ENCODE measurements at regions of chr2 and their contacts with region 1.

Region 1: DNA sequence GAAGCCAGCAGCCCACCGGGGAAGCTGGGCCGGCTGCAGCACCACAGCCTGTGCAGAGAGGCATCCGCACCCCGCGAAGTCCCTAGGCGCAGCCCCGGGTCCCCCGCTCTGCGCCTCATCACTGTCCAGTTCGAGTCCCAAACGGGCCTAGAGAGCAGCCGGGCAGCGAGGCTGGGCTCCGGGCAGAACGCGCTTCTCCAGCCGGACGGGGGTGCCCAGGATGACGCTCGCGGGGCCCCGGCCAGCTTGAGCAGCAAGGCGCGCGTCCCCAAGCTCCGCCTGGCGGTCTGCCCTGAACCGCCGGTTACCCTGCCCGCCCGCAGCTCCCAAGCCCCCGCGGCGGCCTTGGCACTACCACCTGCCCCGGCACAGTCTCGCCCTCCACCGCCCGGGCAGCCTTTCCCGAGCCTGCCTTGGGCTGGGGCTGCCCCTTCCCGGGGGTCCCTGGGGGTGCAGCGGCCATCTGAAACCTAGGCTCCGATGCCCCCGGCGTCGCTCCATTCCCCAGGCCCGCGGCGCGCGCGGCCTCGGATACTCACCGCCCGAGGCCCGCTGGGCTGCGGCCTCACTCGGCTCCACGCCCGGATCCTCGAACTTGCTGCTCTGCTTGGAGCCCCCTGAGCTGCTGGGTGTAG is 591 bp downstream of the SLC16A14 start:
- DNase-seq: peak; percentile 7 to 69 (median 39)
- ATAC-seq: peak; percentile 24
- H3K4me3 ChIP-seq: peak overlapping the region; percentile 50 to 63
- H3K4me3 Mint-ChIP-seq: peak overlapping the region; percentile 80
- H3K27ac ChIP-seq: no peak overlapping the region
- H3K27ac Mint-ChIP-seq: no peak overlapping the region
- H3K4me1 ChIP-seq: no peaks in the 10 kb centered on the region
- H3K4me1 Mint-ChIP-seq: peaks cover 15% of the 10 kb centered on the region
- H3K27me3 ChIP-seq: no peaks in the 10 kb centered on the region
- H3K27me3 Mint-ChIP-seq: peaks cover 27% of the 10 kb centered on the region
- CTCF ChIP-seq: peak; percentile 8

Region 2: GRCh38 chr2:229852565-229852964 is 215.6 kb before region 1 on chr2:
- CTCF ChIA-PET with region 1: no interaction called
- POLR2A ChIA-PET with region 1: no interaction called
- intact Hi-C with region 1: no loop called
- DNase-seq: peak; percentile 16 to 75 (median 63)
- ATAC-seq: peak; percentile 92
- H3K4me3 ChIP-seq: no peak overlapping the region
- H3K4me3 Mint-ChIP-seq: peak overlapping the region; percentile 33
- H3K27ac ChIP-seq: peak overlapping the region; percentile 0 to 28
- H3K27ac Mint-ChIP-seq: peak overlapping the region; percentile 87
- H3K4me1 ChIP-seq: peaks cover 34% of the 10 kb centered on the region
- H3K4me1 Mint-ChIP-seq: peaks cover 73% of the 10 kb centered on the region
- H3K27me3 ChIP-seq: no peaks in the 10 kb centered on the region
- H3K27me3 Mint-ChIP-seq: no peaks in the 10 kb centered on the region
- CTCF ChIP-seq: no peak

Region 3: DNA sequence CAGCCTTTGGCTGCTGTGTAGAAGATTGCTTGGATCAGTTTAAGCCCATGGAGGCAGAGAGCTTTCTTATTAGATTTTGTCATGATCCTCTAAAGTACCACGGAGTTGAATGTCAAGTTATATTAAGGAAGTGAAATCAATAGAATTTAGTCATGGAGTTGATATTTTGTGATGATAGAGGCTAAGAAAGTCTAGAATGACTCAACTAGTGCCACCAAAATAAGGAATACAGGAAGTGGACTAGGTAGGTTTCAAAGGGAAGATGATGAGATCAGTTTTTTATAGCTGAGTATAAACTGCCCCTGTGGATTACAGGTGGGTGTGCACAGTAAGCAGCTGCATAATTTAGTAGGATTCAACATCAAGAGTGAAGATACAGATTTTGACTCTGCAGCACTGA is 120.6 kb before region 1 on chr2:
- CTCF ChIA-PET with region 1: no interaction called
- POLR2A ChIA-PET with region 1: no interaction called
- intact Hi-C with region 1: no loop called
- DNase-seq: no peak
- ATAC-seq: no peak
- H3K4me3 ChIP-seq: no peak overlapping the region
- H3K4me3 Mint-ChIP-seq: no peak overlapping the region
- H3K27ac ChIP-seq: no peak overlapping the region
- H3K27ac Mint-ChIP-seq: no peak overlapping the region
- H3K4me1 ChIP-seq: no peaks in the 10 kb centered on the region
- H3K4me1 Mint-ChIP-seq: no peaks in the 10 kb centered on the region
- H3K27me3 ChIP-seq: no peaks in the 10 kb centered on the region
- H3K27me3 Mint-ChIP-seq: no peaks in the 10 kb centered on the region
- CTCF ChIP-seq: no peak

Region 4: GRCh38 chr2:230053753-230054478 is 14.2 kb before region 1 on chr2:
- CTCF ChIA-PET with region 1: interaction called, 16 read pairs
- POLR2A ChIA-PET with region 1: interaction called, 3 read pairs
- intact Hi-C with region 1: no loop called
- DNase-seq: no peak
- ATAC-seq: no peak
- H3K4me3 ChIP-seq: no peak overlapping the region
- H3K4me3 Mint-ChIP-seq: no peak overlapping the region
- H3K27ac ChIP-seq: no peak overlapping the region
- H3K27ac Mint-ChIP-seq: no peak overlapping the region
- H3K4me1 ChIP-seq: no peaks in the 10 kb centered on the region
- H3K4me1 Mint-ChIP-seq: no peaks in the 10 kb centered on the region
- H3K27me3 ChIP-seq: no peaks in the 10 kb centered on the region
- H3K27me3 Mint-ChIP-seq: no peaks in the 10 kb centered on the region
- CTCF ChIP-seq: no peak

Region 5: DNA sequence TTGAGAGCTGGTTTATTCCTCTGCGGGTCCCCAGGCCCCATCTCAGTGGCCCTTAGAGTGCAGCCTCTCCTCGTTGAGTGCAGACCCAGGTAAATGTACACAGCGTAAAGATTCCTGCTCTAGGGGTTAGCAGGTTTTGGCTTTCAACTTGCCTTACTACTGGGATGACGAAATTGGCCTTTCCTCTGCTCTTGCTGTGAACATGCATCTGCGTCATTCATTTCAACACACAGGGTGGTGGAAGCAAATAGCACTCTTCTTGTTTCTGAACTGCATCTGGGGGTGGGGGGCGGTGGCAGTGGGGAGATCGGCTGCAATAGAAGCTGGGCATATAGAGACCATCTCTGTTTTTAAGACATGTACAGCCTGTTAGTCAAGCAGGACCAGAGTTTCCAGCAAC is 17.1 kb after region 1 on chr2:
- CTCF ChIA-PET with region 1: interaction called, 19 read pairs
- POLR2A ChIA-PET with region 1: no interaction called
- intact Hi-C with region 1: no loop called
- DNase-seq: no peak
- ATAC-seq: no peak
- H3K4me3 ChIP-seq: no peak overlapping the region
- H3K4me3 Mint-ChIP-seq: no peak overlapping the region
- H3K27ac ChIP-seq: no peak overlapping the region
- H3K27ac Mint-ChIP-seq: no peak overlapping the region
- H3K4me1 ChIP-seq: no peaks in the 10 kb centered on the region
- H3K4me1 Mint-ChIP-seq: no peaks in the 10 kb centered on the region
- H3K27me3 ChIP-seq: no peaks in the 10 kb centered on the region
- H3K27me3 Mint-ChIP-seq: peaks cover 3% of the 10 kb centered on the region
- CTCF ChIP-seq: no peak